Posterior vena cava (tissue), 2 donors: ENCODE measurements at regions of chr2 and their contacts with region 1.

Region 1: DNA sequence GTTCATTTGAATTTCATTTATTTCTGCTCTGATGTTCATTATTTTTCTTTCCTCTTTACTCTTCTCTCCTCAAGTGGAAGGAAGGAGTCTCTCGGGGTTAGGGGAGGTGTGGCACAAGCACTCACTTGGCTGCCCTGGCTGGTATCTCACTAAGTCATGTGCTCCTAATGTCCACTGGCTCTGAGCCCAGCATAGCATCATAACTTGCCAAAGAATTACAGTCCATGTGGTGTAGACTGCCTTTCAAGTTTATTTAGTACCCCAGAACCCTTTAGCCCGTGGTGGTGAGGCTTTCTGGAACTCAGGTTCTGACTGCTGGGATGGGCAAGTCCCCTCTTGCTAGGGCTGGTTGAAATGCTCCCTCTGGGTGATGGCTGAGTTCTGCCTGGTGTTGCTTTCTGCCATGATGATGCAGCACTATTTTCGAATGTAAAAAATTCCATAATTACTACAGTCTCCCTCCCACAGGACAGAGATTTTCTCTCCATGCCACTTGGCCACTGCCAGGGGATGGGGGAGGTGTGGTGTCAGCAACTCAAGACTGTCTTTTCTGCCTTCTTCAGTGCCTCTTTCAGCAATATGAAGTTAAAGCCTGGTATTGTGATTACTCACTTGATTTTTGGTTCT is 22.2 kb downstream of the SPAG16 start:
- DNase-seq: no peak

Region 2: GRCh38 chr2:213868526-213868925 is 562.1 kb after region 1 on chr2:
- intact Hi-C with region 1: loop called in 1 of 2 experiments (anchors 5 kb)
- DNase-seq: no peak

Region 3: DNA sequence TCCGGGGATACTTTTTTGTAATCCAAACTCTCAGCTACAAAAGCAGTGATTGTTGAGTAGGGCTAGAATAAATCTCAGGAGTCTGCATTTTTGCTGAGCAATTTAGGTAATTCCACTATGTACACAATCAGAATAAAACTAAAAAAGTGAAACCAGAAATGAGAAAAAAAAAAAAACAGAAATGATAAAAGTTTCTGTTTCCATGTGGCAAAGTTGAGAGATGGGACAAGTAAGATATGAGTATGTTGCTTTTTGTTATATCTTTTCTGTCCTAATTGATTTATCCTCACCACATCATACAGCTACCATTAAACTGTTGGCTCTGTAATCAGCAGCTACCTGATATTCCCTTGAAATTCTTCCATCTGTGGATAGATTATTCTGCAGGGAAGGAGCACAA is 1197.1 kb after region 1 on chr2:
- intact Hi-C with region 1: no loop called
- DNase-seq: no peak